Prostate gland (tissue), 2 donors: ENCODE measurements at regions of chr1 and their contacts with region 1.

Region 1: GRCh38 chr1:94541175-94542087 is at the start of gene F3:
- DNase-seq: peak; percentile 94
- H3K4me3 ChIP-seq: peak within 1 kb of the TSS; percentile 75 to 90
- H3K27ac ChIP-seq: peak within 1 kb of the TSS; percentile 90 to 94
- H3K4me1 ChIP-seq: no peaks in the 10 kb centered on the region
- H3K27me3 ChIP-seq: no peaks in the 10 kb centered on the region
- CTCF ChIP-seq: peak in 2 of 4 experiments; percentile 12 to 13
- POLR2A ChIP-seq: peak; percentile 92
- total RNA-seq, gene F3: 36.3 to 120 TPM

Region 2: DNA sequence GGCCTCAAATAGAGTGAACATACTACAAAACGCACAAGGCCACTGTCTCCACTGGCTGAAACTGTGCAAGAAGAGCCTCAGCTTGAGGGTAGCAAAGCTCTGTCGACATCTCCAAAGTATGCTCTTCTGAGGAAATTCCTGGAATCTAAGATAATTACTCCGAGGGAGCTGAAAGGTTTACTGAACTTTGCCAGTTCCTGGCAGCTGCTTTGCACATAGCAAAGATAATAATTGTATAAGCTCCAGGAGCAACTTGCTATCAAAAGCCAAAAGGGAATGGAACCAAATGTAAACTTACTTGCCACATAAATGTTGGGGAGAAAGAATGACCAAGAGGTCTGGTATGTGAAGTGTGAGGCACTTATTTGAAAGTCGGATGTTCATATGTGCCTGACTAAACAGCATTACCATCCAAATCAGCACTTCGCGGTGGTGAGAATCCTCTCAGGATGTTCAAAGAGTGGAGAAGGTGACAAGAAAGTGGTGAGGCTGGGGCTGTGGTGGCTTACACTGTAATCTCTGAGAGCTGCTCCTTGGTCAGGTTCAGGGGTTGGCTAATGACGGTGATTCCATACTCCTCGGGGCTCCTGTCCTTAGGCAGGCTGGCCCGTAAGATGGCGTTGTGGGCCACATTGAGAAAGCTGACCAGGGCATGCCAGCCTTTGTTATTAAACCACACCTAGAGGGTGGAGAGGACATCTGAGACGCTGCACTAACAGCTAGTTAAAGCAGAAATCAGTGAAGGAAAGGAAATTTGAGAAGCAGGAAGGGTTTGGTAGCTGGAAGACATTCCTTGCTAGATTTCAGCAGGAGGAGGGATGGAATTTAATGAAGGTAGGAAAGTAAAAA is 520.5 kb before region 1 on chr1:
- intact Hi-C with region 1: no loop called
- DNase-seq: no peak
- H3K4me3 ChIP-seq: no peak overlapping the region
- H3K27ac ChIP-seq: no peak overlapping the region
- H3K4me1 ChIP-seq: no peaks in the 10 kb centered on the region
- H3K27me3 ChIP-seq: no peaks in the 10 kb centered on the region
- CTCF ChIP-seq: no peak
- POLR2A ChIP-seq: no peak

Region 3: DNA sequence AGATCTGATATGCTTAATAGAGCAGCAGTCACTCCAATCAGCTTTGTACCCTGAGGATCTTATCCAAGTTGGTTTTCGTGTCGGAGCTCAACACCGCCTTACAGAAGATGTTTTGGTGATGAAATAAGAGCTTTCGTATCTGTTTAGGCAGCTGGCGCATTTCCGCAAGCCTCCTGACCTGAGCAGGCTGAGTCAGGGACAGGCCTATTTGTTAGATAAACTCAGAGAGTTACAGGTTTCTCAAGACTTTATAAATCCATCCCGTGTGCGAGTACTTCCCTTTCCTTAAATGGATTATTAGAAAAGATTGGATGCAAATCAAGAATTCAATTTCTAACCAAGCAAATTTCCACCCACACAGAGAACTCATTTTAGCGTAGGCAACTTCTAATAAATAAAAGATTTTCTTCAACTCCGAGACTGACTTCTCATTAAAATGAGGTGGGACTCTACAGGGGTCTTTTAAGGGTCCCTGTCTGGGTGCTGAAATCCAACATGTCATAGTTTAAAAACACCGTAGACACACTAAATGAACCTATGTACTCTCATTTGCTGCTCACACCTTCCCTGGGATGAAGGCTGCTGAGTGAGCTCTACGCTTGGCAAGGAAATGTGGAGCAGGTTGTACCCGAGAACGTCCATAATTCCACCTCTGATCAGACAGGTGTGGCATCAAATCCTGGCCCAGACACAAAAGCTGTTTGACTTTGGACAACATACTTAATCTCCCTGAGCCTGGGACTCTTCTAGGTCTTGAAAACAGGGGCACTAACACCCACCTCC is 107.0 kb after region 1 on chr1:
- intact Hi-C with region 1: loop called (anchors 2 kb)
- DNase-seq: peak; percentile 85
- H3K4me3 ChIP-seq: no peak overlapping the region
- H3K27ac ChIP-seq: peak overlapping the region; percentile 83 to 85
- H3K4me1 ChIP-seq: no peaks in the 10 kb centered on the region
- H3K27me3 ChIP-seq: no peaks in the 10 kb centered on the region
- CTCF ChIP-seq: no peak
- POLR2A ChIP-seq: peak; percentile 9